GM12878 (cell line): ENCODE measurements at regions of chr5 and their contacts with region 1.

Region 1: DNA sequence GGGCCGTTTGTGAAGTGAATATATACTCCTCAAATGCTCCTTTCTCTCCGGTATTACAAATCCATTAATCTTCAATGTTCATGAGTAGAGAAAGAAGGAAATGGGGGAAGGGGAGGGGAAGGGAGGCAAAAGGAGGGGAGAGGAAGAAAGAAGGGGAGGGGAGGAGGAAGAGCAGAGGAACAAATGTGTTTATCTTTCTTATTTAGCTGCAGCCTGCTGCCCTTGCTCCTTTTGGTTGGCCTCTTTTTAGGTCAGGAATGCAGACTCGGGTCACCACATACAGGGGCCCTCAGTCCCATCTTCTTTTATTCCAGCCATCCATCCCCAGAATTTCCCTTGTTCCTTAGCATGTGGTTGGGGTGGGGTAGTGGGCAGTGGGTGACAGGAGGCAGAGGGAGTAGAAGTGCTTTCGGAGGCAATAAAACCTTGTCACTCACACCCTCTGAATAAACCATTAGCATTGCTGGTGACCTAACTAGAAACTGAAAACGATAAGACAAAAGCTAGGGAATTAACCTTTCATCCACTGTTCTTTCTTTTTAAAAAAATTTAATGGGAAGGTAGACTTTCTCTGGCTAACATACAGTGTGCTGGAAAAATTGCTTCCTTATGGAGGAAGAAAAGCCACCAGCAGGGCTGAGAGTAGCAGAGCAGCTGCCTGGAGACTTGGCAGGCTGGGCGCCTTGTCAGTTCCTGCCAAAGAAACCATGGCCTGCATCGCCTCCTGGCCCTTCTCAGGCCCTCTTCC is 16.8 kb upstream of the PRLR start:
- DNase-seq: no peak
- ATAC-seq: peak; percentile 75
- H3K4me3 ChIP-seq: no peak overlapping the region
- H3K27ac ChIP-seq: no peak overlapping the region; the same call in 1 of the 2 replicates
- H3K4me1 ChIP-seq: no peaks in the 10 kb centered on the region
- H3K27me3 ChIP-seq: no peaks in the 10 kb centered on the region
- CTCF ChIP-seq: no peak
- EP300 ChIP-seq: peak in 1 of 2 experiments; percentile 13; a peak in 1 of 4 replicates
- POLR2A ChIP-seq: no peak
- RAD21 ChIP-seq: no peak

Region 2: DNA sequence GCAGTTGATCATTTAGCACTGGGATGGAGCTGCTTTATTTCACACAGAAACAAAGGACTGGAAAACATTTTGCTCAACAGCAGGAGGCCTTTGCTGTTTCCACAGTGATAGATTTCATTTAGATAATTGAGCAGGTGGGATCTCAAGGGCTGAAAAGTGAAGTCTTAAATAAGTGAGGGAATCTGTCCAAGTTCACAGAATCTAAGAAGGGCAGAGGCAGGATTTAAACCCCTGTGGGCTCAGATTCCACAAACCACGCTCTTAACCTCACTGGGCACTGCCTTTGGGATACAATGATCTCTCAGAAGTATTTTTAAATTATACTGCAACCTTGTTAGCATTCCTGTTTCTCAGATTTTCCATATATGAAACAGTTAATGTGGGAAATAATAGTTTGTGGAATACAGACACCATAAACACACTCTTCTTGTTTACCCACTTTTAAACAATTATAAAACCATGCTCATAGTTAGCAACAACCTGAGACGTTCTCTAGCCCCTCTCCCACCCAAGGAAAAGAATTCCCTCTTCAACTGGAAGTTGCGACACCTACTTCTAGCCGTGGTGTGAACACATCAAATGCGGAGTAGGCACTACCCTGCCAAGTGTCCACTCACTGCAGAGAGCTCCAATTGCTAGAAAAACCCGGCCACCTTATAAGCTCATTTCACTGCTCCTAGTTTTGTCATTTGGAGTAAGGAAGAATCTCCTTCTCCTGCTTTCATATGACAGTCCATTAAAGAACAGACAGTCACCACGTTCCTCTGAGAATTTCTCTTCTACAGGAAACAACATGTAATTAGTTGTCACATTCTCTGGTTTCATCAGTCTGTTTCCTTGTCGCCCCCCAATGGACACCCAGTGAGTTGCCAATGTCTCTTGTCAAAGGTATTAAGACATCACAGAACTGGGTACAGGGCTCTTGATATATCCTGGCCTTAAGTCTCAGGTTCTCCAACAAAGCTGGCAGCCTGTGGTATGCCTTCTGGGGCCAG is 64.2 kb before region 1 on chr5:
- CTCF ChIA-PET with region 1: interaction called, 4 read pairs
- POLR2A ChIA-PET with region 1: no interaction called
- RAD21 ChIA-PET with region 1: no interaction called
- SMC1A ChIA-PET with region 1: interaction called, 10 read pairs
- in situ Hi-C with region 1: no loop called
- intact Hi-C with region 1: no loop called
- DNase-seq: peak; percentile 27
- ATAC-seq: peak; percentile 91
- H3K4me3 ChIP-seq: no peak overlapping the region
- H3K27ac ChIP-seq: no peak overlapping the region
- H3K4me1 ChIP-seq: no peaks in the 10 kb centered on the region
- H3K27me3 ChIP-seq: no peaks in the 10 kb centered on the region
- CTCF ChIP-seq: peak; percentile 59 to 69 (median 63)
- EP300 ChIP-seq: no peak
- POLR2A ChIP-seq: no peak
- RAD21 ChIP-seq: peak; percentile 62

Region 3: DNA sequence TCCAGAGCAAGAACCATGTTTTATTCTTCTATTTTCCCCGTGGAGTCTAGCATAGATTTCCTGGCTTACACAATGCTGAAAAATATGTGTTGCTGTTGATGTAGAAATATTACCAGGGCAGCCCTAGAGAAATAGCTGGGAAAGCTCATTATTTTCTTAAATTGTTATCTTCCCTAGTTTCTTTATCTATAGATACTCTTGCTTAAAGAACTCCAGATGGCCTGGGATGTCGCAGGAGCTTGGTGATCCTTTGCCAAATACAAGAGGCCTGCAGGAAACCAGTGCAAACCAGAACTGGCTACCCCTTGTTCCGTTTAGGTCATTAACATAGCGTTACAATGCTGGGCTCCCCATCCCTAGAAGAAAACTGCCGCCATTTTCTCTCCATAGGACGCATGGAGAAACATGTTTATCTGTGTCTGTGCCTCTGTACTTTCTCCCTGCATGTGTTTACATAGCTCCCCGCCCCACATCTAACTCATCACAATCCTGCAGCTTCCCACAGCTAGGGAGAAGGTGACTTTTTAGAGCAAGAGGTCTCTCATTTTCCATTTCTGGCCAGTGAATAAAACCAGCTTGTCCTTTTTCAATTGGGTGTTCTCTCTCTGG is 23.2 kb before region 1 on chr5:
- CTCF ChIA-PET with region 1: interaction called, 56 read pairs
- POLR2A ChIA-PET with region 1: interaction called, 46 read pairs
- RAD21 ChIA-PET with region 1: interaction called, 79 read pairs
- SMC1A ChIA-PET with region 1: interaction called, 95 read pairs
- in situ Hi-C with region 1: no loop called
- intact Hi-C with region 1: loop called (anchors 1 kb)
- DNase-seq: no peak
- ATAC-seq: no peak
- H3K4me3 ChIP-seq: no peak overlapping the region
- H3K27ac ChIP-seq: no peak overlapping the region
- H3K4me1 ChIP-seq: no peaks in the 10 kb centered on the region
- H3K27me3 ChIP-seq: no peaks in the 10 kb centered on the region; a peak in 2 of 4 replicates
- CTCF ChIP-seq: no peak
- EP300 ChIP-seq: no peak
- POLR2A ChIP-seq: no peak
- RAD21 ChIP-seq: no peak

Region 4: GRCh38 chr5:35266276-35266675 is 19.2 kb after region 1 on chr5:
- CTCF ChIA-PET with region 1: interaction called, 6 read pairs
- POLR2A ChIA-PET with region 1: interaction called, 4 read pairs
- RAD21 ChIA-PET with region 1: interaction called, 13 read pairs
- SMC1A ChIA-PET with region 1: interaction called, 39 read pairs
- in situ Hi-C with region 1: no loop called
- intact Hi-C with region 1: no loop called
- DNase-seq: no peak
- ATAC-seq: no peak
- H3K4me3 ChIP-seq: no peak overlapping the region
- H3K27ac ChIP-seq: no peak overlapping the region
- H3K4me1 ChIP-seq: no peaks in the 10 kb centered on the region
- H3K27me3 ChIP-seq: no peaks in the 10 kb centered on the region
- CTCF ChIP-seq: no peak
- EP300 ChIP-seq: no peak
- POLR2A ChIP-seq: no peak
- RAD21 ChIP-seq: no peak

Region 5: DNA sequence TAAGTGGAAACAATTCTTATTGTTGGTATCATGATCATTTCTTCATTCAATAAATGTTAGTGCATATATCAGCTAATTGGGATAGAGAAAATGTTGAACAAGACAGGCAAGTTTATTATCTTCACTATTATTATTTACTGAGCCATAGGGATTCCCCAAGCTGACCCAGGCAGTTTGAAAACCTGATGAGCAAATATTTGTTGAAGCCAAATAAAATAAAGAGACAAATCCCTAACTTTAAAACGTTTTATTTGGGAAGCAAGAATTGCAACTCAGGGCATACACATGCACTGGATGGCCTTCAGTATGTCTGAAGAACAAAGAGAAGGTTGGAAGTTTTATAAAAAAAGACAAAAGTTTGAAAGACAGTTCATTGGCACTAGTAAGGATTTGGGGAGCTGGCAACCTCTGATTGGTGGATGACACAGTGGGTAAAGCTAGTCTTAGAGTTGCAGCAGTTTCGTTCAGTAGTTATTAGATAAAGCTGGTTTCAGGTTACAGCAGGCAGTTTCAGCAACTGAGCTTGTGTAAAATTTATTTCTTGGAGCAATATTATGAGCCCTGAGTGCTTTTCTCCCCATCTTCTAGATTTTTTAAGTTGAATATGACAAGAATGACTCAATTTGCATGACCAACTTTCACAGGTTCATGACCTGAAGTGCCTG is 27.9 kb after region 1 on chr5:
- CTCF ChIA-PET with region 1: interaction called, 5 read pairs
- POLR2A ChIA-PET with region 1: interaction called, 3 read pairs
- RAD21 ChIA-PET with region 1: interaction called, 3 read pairs
- SMC1A ChIA-PET with region 1: interaction called, 16 read pairs
- in situ Hi-C with region 1: no loop called
- intact Hi-C with region 1: no loop called
- DNase-seq: no peak
- ATAC-seq: no peak
- H3K4me3 ChIP-seq: no peak overlapping the region
- H3K27ac ChIP-seq: no peak overlapping the region
- H3K4me1 ChIP-seq: no peaks in the 10 kb centered on the region
- H3K27me3 ChIP-seq: no peaks in the 10 kb centered on the region
- CTCF ChIP-seq: no peak
- EP300 ChIP-seq: no peak
- POLR2A ChIP-seq: no peak
- RAD21 ChIP-seq: no peak

Region 6: DNA sequence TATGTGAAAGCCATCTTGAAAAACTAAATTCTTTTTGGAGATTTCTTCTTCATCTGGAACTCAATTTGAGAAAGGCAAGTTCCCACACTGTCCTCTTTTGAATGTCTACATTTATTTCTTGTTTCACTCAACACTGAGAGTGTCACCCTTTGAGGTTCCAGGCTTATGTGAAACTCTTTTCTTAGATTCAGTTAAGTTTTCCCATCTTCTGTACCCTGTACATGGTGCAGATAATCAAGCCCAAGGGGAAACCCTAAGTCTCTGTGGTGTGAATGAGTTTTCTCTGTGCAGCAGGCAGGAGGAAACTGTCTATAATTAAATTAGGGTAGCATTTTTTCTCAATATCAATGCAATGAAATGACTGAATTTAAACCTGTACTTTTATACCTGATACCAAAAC is 55.5 kb after region 1 on chr5:
- CTCF ChIA-PET with region 1: interaction called, 7 read pairs
- POLR2A ChIA-PET with region 1: interaction called, 4 read pairs
- RAD21 ChIA-PET with region 1: interaction called, 8 read pairs
- SMC1A ChIA-PET with region 1: interaction called, 9 read pairs
- in situ Hi-C with region 1: no loop called
- intact Hi-C with region 1: loop called (anchors 1 kb)
- DNase-seq: peak; percentile 92
- ATAC-seq: peak; percentile 93
- H3K4me3 ChIP-seq: no peak overlapping the region
- H3K27ac ChIP-seq: peak overlapping the region; percentile 13; the same call in 1 of the 2 replicates
- H3K4me1 ChIP-seq: no peaks in the 10 kb centered on the region; the same call in 1 of the 2 replicates
- H3K27me3 ChIP-seq: no peaks in the 10 kb centered on the region
- CTCF ChIP-seq: no peak
- EP300 ChIP-seq: peak; percentile 66 to 69; a peak in 2 of 4 replicates
- POLR2A ChIP-seq: no peak
- RAD21 ChIP-seq: no peak

Region 7: DNA sequence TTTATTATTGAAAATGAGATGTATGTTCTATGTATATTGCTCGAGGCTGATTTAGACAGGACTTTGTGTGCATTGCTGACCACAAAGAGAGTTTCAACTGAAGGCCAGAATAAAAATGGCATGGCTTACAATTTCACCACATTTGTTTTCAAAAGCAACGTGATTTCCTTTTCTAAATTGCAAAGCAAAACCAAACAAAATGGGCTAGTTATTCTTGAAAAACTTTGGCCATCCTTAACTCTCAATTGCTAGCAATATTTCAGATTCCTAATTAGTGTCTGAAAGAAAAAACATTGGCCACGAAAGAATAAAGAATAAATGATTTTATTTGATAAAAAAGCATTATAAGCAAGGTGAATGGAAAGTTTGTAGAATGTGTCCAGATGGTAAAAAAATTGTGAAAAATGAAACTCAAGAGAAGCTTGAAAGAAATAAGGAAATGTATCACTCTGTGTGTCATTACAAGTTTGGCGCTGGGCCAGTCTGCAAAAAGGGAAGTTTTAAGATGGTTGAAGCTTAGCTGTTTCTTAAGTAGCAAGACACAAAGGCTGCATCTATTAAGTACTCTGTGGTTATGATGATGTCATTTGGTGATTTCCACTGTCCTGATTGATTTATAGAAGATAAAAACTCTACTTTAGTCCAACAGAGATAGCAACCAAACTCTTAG is 72.4 kb after region 1 on chr5:
- CTCF ChIA-PET with region 1: interaction called, 3 read pairs
- POLR2A ChIA-PET with region 1: interaction called, 3 read pairs
- RAD21 ChIA-PET with region 1: interaction called, 14 read pairs
- SMC1A ChIA-PET with region 1: interaction called, 31 read pairs
- in situ Hi-C with region 1: no loop called
- intact Hi-C with region 1: loop called (anchors 2 kb)
- DNase-seq: peak; percentile 96
- ATAC-seq: peak; percentile 91
- H3K4me3 ChIP-seq: no peak overlapping the region
- H3K27ac ChIP-seq: peak overlapping the region; percentile 66
- H3K4me1 ChIP-seq: peaks cover 11% of the 10 kb centered on the region
- H3K27me3 ChIP-seq: no peaks in the 10 kb centered on the region
- CTCF ChIP-seq: no peak
- EP300 ChIP-seq: peak; percentile 92 to 96
- POLR2A ChIP-seq: no peak
- RAD21 ChIP-seq: no peak

Region 8: GRCh38 chr5:35502206-35502605 is 255.1 kb after region 1 on chr5:
- CTCF ChIA-PET with region 1: no interaction called
- POLR2A ChIA-PET with region 1: no interaction called
- RAD21 ChIA-PET with region 1: no interaction called
- SMC1A ChIA-PET with region 1: no interaction called
- in situ Hi-C with region 1: no loop called
- intact Hi-C with region 1: no loop called
- DNase-seq: no peak
- ATAC-seq: no peak
- H3K4me3 ChIP-seq: no peak overlapping the region
- H3K27ac ChIP-seq: no peak overlapping the region
- H3K4me1 ChIP-seq: no peaks in the 10 kb centered on the region
- H3K27me3 ChIP-seq: no peaks in the 10 kb centered on the region
- CTCF ChIP-seq: no peak
- EP300 ChIP-seq: no peak
- POLR2A ChIP-seq: no peak
- RAD21 ChIP-seq: no peak